H1 (cell line): ENCODE measurements at regions of chr5 and their contacts with region 1.

Region 1: GRCh38 chr5:102782311-102782770 is 27.2 kb downstream of the PAM start:
- DNase-seq: no peak
- H3K4me3 ChIP-seq: no peak overlapping the region
- H3K27ac ChIP-seq: no peak overlapping the region
- H3K4me1 ChIP-seq: no peaks in the 10 kb centered on the region
- H3K27me3 ChIP-seq: no peaks in the 10 kb centered on the region
- CTCF ChIP-seq: no peak
- EP300 ChIP-seq: no peak
- POLR2A ChIP-seq: no peak
- RAD21 ChIP-seq: no peak

Region 2: GRCh38 chr5:102754767-102755431 is 27.4 kb before region 1 on chr5 and contains the start of gene PAM:
- CTCF ChIA-PET with region 1: interaction called, 22 read pairs
- POLR2A ChIA-PET with region 1: interaction called, 4 read pairs
- DNase-seq: peak in 1 of 2 experiments; percentile 85
- H3K4me3 ChIP-seq: peak within 1 kb of the TSS; percentile 68 to 95 (median 91)
- H3K27ac ChIP-seq: peak within 1 kb of the TSS; percentile 32; the same call in 1 of the 2 replicates
- H3K4me1 ChIP-seq: peaks cover 0 to 11% (median 8%) of the 10 kb centered on the region in 4 experiments; a peak in 6 of 7 replicates
- H3K27me3 ChIP-seq: peaks cover 0 to 14% (median 13%) of the 10 kb centered on the region in 4 experiments; a peak in 6 of 7 replicates
- CTCF ChIP-seq: no peak
- EP300 ChIP-seq: no peak
- POLR2A ChIP-seq: peak; percentile 40 to 41; a peak in 2 of 3 replicates
- RAD21 ChIP-seq: no peak
- total RNA-seq, gene PAM: 67.7 and 67.8 TPM in 2 replicates

Region 3: GRCh38 chr5:102762095-102762534 is 20.2 kb before region 1 on chr5:
- CTCF ChIA-PET with region 1: interaction called, 25 read pairs
- POLR2A ChIA-PET with region 1: no interaction called
- DNase-seq: no peak
- H3K4me3 ChIP-seq: no peak overlapping the region
- H3K27ac ChIP-seq: no peak overlapping the region
- H3K4me1 ChIP-seq: peaks cover 0 to 7% (median 3%) of the 10 kb centered on the region in 4 experiments; a peak in 4 of 7 replicates
- H3K27me3 ChIP-seq: no peaks in the 10 kb centered on the region
- CTCF ChIP-seq: no peak
- EP300 ChIP-seq: no peak
- POLR2A ChIP-seq: no peak
- RAD21 ChIP-seq: no peak

Region 4: GRCh38 chr5:102799017-102799416 is 16.7 kb after region 1 on chr5:
- CTCF ChIA-PET with region 1: interaction called, 18 read pairs
- POLR2A ChIA-PET with region 1: interaction called, 3 read pairs
- DNase-seq: no peak
- H3K4me3 ChIP-seq: no peak overlapping the region
- H3K27ac ChIP-seq: no peak overlapping the region
- H3K4me1 ChIP-seq: peaks cover 2 to 29% (median 6%) of the 10 kb centered on the region in 4 experiments
- H3K27me3 ChIP-seq: no peaks in the 10 kb centered on the region
- CTCF ChIP-seq: no peak
- EP300 ChIP-seq: no peak
- POLR2A ChIP-seq: no peak
- RAD21 ChIP-seq: no peak

Region 5: DNA sequence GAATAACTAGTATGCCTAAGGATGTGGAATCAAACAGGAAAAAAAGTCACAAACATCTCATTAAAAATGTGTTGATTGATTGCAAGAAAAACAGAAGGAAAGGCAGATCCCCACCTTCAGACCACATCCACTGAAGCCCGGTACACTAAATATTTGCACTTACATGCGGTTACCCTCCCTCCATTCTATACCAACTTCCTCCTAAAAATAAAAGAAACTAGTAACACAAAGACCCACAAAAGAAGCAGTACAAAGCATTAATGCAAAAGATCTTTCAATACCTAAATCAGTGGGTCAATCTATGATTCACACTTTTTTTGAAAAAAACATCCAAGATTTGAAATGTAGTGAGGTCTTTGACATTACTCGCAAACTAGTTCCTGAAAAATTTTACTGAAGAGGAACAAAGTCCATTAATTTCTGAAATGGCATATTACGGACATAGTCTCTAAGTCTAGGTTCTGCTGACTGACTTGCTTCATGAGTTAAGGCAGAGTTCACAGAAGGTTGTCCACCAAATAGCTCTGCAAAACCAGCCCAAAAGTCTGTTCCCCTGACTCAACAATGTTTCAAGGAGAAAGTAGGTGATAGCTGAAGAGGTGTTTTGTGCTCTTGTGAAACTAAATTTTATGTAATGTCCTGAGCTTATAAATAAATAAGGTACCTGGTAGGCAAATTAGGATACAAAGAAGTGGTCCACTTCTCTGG is 73.5 kb after region 1 on chr5:
- CTCF ChIA-PET with region 1: interaction called, 10 read pairs
- POLR2A ChIA-PET with region 1: no interaction called
- DNase-seq: no peak
- H3K4me3 ChIP-seq: no peak overlapping the region
- H3K27ac ChIP-seq: no peak overlapping the region
- H3K4me1 ChIP-seq: no peaks in the 10 kb centered on the region
- H3K27me3 ChIP-seq: no peaks in the 10 kb centered on the region
- CTCF ChIP-seq: no peak
- EP300 ChIP-seq: no peak
- POLR2A ChIP-seq: no peak
- RAD21 ChIP-seq: no peak

Region 6: GRCh38 chr5:102959055-102959454 is 176.7 kb after region 1 on chr5:
- CTCF ChIA-PET with region 1: no interaction called
- POLR2A ChIA-PET with region 1: no interaction called
- DNase-seq: no peak
- H3K4me3 ChIP-seq: no peak overlapping the region
- H3K27ac ChIP-seq: no peak overlapping the region
- H3K4me1 ChIP-seq: no peaks in the 10 kb centered on the region
- H3K27me3 ChIP-seq: no peaks in the 10 kb centered on the region
- CTCF ChIP-seq: no peak
- EP300 ChIP-seq: no peak
- POLR2A ChIP-seq: no peak
- RAD21 ChIP-seq: no peak

Region 7: DNA sequence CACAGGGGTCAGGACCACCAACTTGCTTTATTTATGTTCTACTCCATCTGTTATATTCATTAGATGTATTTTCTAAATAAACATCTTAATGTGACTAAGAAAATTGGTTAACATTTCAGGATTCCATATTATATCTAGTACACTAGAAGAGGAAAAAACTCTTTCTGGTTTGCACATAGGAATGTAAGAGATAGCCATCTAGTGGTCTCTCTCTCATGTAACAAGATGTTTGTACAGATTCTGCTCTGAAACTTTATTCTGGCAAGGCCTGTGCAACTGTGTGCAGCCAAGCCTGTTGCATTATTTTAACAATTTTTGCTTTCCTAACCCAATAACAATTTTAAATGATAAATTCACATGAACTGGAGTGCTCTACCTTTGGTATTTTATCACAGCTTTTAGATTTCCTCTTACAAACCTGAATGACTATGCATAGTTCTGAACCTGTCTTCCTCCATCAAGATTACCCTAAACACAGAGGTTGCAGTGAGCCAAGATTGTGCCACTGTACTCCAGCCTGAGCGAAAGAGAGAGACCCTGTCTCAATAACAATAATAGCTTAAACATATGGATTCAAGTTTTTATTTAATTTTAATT is 189.5 kb after region 1 on chr5:
- CTCF ChIA-PET with region 1: interaction called, 29 read pairs
- POLR2A ChIA-PET with region 1: no interaction called
- DNase-seq: no peak
- H3K4me3 ChIP-seq: no peak overlapping the region
- H3K27ac ChIP-seq: no peak overlapping the region
- H3K4me1 ChIP-seq: no peaks in the 10 kb centered on the region
- H3K27me3 ChIP-seq: no peaks in the 10 kb centered on the region
- CTCF ChIP-seq: peak in 2 of 3 experiments; percentile 22 to 29; a peak in 2 of 4 replicates
- EP300 ChIP-seq: no peak
- POLR2A ChIP-seq: no peak
- RAD21 ChIP-seq: peak; percentile 37 to 48; a peak in 3 of 4 replicates